ENCODE measurements at regions of chr1 and their contacts with region 1.

Region 1: GRCh38 chr1:21176586-21177555 is at the start of gene EIF4G3:
- DNase-seq: peak; percentile 94
- ATAC-seq: peak; percentile 97
- H3K4me3 ChIP-seq: peak within 1 kb of the TSS; percentile 97
- H3K27ac ChIP-seq: peak within 1 kb of the TSS; percentile 92
- H3K4me1 ChIP-seq: peaks cover 3% of the 10 kb centered on the region; the same call in 1 of the 2 replicates
- H3K27me3 ChIP-seq: no peaks in the 10 kb centered on the region
- CTCF ChIP-seq: no peak
- POLR2A ChIP-seq: peak; percentile 90
- RAD21 ChIP-seq: no peak
- total RNA-seq, gene EIF4G3: 25.8 and 29.2 TPM in 2 replicates

Region 2: GRCh38 chr1:20786253-20787028 is 390.4 kb before region 1 on chr1:
- CTCF ChIA-PET with region 1: no interaction called
- POLR2A ChIA-PET with region 1: interaction called, 3 read pairs
- dilution Hi-C with region 1: no loop called
- in situ Hi-C with region 1: no loop called
- intact Hi-C with region 1: loop called (anchors 1 kb)
- DNase-seq: peak; percentile 92
- ATAC-seq: peak; percentile 87
- H3K4me3 ChIP-seq: peak overlapping the region; percentile 85
- H3K27ac ChIP-seq: peak overlapping the region; percentile 92
- H3K4me1 ChIP-seq: peaks cover 2% of the 10 kb centered on the region; the same call in 1 of the 2 replicates
- H3K27me3 ChIP-seq: no peaks in the 10 kb centered on the region
- CTCF ChIP-seq: 0 out of 2 replicates have a peak, but pooled peaks have one; percentile 0
- POLR2A ChIP-seq: no peak; the same call in none of the 2 replicates
- RAD21 ChIP-seq: peak; percentile 1; the same call in 1 of the 2 replicates

Region 3: GRCh38 chr1:20867847-20868246 is 309.0 kb before region 1 on chr1:
- CTCF ChIA-PET with region 1: no interaction called
- POLR2A ChIA-PET with region 1: interaction called, 9 read pairs
- dilution Hi-C with region 1: no loop called
- in situ Hi-C with region 1: no loop called
- intact Hi-C with region 1: loop called (anchors 10 kb)
- DNase-seq: peak; percentile 53
- ATAC-seq: no peak
- H3K4me3 ChIP-seq: no peak overlapping the region
- H3K27ac ChIP-seq: no peak overlapping the region
- H3K4me1 ChIP-seq: peaks cover 13% of the 10 kb centered on the region
- H3K27me3 ChIP-seq: no peaks in the 10 kb centered on the region
- CTCF ChIP-seq: no peak
- POLR2A ChIP-seq: no peak
- RAD21 ChIP-seq: no peak

Region 4: GRCh38 chr1:21022279-21023040 is 154.4 kb before region 1 on chr1:
- CTCF ChIA-PET with region 1: no interaction called
- POLR2A ChIA-PET with region 1: no interaction called
- dilution Hi-C with region 1: no loop called
- in situ Hi-C with region 1: no loop called
- intact Hi-C with region 1: loop called (anchors 2 kb)
- DNase-seq: peak; percentile 99
- ATAC-seq: peak; percentile 97
- H3K4me3 ChIP-seq: no peak overlapping the region
- H3K27ac ChIP-seq: peak overlapping the region; percentile 45; the same call in 1 of the 2 replicates
- H3K4me1 ChIP-seq: peaks cover 10% of the 10 kb centered on the region
- H3K27me3 ChIP-seq: no peaks in the 10 kb centered on the region
- CTCF ChIP-seq: no peak
- POLR2A ChIP-seq: no peak
- RAD21 ChIP-seq: no peak; the same call in 1 of the 2 replicates

Region 5: DNA sequence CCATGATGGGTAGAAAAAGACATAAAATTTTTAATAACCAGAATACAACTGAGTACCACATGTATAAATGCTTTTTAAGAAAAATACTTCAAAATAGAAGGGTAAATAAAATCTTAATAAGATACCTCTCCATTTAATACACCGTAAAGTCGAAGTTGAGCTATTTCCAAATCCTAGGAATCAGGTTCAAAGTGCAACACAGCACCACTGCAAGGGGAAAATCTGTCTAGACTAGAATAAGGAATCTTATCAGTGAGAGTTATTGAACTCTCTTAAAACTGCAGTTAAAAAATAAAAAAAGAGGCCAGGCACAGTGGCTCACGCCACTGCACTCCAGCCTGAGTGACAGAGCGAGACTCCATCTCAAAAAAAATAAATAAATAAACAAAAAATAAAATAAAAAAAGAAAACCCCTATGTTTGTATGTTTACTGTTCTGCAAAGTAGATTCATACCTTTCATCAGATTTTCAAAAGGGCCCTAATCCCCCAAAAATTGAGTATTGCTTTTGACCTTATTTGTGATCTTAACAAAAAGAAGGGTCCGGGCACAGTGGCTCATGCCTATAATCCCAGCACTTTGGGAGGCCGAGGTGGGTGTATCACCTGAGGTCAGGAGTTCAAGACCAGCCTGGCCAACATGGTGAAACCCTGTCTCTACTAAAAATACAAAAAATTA is 109.2 kb before region 1 on chr1:
- CTCF ChIA-PET with region 1: no interaction called
- POLR2A ChIA-PET with region 1: interaction called, 10 read pairs
- dilution Hi-C with region 1: no loop called
- in situ Hi-C with region 1: no loop called
- intact Hi-C with region 1: no loop called
- DNase-seq: no peak
- ATAC-seq: no peak
- H3K4me3 ChIP-seq: no peak overlapping the region
- H3K27ac ChIP-seq: no peak overlapping the region
- H3K4me1 ChIP-seq: peaks cover 1% of the 10 kb centered on the region; the same call in 1 of the 2 replicates
- H3K27me3 ChIP-seq: no peaks in the 10 kb centered on the region
- CTCF ChIP-seq: no peak
- POLR2A ChIP-seq: no peak
- RAD21 ChIP-seq: no peak